Posterior cingulate gyrus (tissue), 11 donors: ENCODE measurements at regions of chr5 and their contacts with region 1.

Region 1: GRCh38 chr5:39080597-39081204 is 6.5 kb upstream of the RICTOR start:
- DNase-seq: peak in 6 of 10 donors; percentile 25 to 87 (median 50)

Region 2: DNA sequence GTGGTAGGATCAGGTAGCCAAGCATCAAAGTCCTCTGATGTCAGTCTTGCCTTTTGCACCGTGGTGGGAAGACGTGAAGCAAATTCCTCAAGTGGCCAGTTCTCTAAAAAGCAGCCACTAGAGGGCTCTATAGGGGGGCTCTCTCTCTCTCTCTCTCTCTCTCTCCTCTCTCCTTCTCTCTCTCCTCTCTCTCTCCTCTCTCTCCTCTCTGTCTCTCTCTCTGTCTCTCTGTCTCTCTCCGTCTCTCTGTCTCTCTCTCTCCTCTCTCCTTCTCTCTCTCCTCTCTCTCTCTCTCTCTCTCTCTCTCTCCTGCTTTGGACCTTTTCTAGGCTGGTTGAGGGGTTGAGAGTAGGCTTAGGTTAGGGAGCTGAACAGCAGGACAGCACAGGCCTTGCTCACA is 248.8 kb before region 1 on chr5:
- intact Hi-C with region 1: loop called (anchors 10 kb)
- DNase-seq: no peak

Region 3: DNA sequence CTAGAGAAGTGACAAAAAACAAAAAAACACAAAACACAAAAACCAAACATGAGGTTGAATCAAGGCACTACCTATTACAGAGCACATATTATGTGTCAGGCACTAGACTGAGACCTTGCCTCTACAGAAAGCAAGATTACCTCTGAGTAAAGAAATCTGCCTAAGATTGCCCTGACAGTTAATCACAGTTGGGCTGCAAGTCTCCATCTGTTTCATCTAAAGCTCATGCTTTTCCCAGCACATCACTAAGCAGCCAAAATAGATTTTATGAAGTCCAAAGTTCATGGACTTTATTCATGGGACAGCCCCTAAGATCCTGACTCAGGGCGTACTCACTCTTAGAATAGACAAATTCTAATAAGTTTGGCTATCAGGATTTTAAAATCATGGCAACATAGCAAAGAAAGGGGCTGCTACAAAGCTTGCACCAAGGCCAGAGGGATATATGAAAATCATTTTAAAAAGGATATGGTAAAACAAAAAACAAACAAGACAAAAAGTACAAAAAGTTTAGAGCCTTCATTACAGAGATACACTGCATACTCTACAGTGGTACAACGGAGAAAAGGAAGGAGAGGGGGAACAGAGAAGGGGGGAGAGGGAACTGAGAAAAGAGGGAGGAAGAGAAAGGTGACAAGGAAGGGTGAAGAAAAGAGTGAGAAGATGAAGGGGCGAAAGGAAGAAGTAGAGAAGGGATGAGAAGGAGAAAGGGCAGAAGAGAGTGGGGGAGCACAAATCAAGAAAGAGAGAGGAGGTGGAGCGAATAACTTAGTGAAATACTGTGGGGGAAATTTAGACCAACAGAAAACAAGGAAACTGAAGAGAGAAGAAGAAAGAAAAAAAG is 64.7 kb before region 1 on chr5:
- intact Hi-C with region 1: no loop called
- DNase-seq: no peak